Right cardiac atrium (tissue), 5 donors: ENCODE measurements at regions of chr7 and their contacts with region 1.

Region 1: GRCh38 chr7:14691597-14692203 is 210.9 kb downstream of the DGKB start:
- DNase-seq: peak; percentile 38 to 76 (median 63)
- ATAC-seq: no peak
- H3K4me3 ChIP-seq: no peak overlapping the region
- H3K27ac ChIP-seq: no peak overlapping the region
- H3K4me1 ChIP-seq: no peaks in the 10 kb centered on the region
- H3K27me3 ChIP-seq: no peaks in the 10 kb centered on the region

Region 2: GRCh38 chr7:13279854-13280435 is 1411.8 kb before region 1 on chr7:
- intact Hi-C with region 1: loop called in 3 of 4 experiments (anchors 5 kb)
- DNase-seq: no peak
- ATAC-seq: no peak
- H3K4me3 ChIP-seq: no peak overlapping the region
- H3K27ac ChIP-seq: no peak overlapping the region
- H3K4me1 ChIP-seq: no peaks in the 10 kb centered on the region
- H3K27me3 ChIP-seq: no peaks in the 10 kb centered on the region